Colonic mucosa (tissue), 4 donors: ENCODE measurements at regions of chr15 and their contacts with region 1.

Region 1: DNA sequence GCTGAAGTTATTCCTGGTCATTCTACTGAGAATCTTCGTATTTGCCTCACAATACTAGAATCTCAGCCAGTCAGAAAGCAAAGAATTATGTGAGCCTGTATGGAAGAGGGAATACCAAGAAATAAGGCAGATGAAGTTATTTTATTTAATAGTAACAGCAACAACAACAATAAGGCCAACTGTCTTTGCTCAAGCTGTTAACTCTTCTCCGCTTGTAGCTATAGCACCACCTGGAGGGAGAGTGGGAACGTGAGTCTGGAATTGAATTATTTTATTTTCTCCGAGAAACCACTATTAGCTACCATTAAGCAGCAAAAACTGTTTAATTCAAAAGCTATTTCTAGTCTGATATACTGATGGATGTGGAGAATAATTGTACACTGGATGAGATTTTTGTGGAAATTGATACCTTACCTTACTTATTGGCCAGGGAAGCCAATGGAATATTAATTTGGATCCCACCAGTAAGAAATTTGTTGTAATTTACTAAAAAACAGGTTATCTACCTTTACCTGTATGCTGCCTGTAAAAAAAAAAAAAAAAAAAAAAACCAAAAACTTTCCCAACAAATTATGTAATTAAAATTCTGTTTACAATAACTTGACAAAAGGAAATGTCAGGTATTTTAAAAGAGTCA is 50.1 kb downstream of the CALML4 start:
- DNase-seq: peak; percentile 56
- H3K4me3 ChIP-seq: no peak overlapping the region
- H3K27ac ChIP-seq: no peak overlapping the region
- H3K4me1 ChIP-seq: no peaks in the 10 kb centered on the region
- H3K27me3 ChIP-seq: no peaks in the 10 kb centered on the region
- CTCF ChIP-seq: peak; percentile 68

Region 2: DNA sequence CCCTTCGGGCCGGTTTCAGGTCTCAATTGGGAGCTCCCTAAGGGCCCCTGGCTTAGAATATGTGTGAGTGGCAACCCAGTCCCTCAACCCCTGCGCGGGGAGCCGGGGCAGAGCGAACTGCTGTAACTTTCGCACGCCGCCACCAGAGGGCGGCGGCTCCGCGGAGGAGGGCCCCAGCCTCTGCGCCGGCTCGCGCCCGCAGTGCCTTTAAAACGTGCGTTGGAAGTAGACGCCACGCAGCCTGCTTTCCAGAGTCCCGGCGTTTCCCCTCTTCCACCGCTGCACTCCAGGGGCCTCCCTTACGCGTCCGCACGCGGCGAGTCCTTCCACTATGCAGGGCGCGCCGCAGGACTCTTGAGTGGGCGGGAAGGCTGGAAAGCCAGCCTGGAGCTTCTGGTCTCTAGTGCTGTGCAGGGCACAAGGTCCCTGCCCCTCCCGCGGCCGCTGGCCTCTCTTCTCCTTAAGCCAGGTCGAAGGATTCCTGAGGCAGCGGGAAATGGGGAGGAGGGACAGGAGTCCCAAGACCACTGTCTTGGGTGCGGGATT is 291.5 kb before region 1 on chr15:
- intact Hi-C with region 1: loop called (anchors 1 kb)
- DNase-seq: peak; percentile 73
- H3K4me3 ChIP-seq: peak overlapping the region; percentile 56
- H3K27ac ChIP-seq: no peak overlapping the region
- H3K4me1 ChIP-seq: peaks cover 6% of the 10 kb centered on the region
- H3K27me3 ChIP-seq: no peaks in the 10 kb centered on the region
- CTCF ChIP-seq: peak; percentile 90

Region 3: DNA sequence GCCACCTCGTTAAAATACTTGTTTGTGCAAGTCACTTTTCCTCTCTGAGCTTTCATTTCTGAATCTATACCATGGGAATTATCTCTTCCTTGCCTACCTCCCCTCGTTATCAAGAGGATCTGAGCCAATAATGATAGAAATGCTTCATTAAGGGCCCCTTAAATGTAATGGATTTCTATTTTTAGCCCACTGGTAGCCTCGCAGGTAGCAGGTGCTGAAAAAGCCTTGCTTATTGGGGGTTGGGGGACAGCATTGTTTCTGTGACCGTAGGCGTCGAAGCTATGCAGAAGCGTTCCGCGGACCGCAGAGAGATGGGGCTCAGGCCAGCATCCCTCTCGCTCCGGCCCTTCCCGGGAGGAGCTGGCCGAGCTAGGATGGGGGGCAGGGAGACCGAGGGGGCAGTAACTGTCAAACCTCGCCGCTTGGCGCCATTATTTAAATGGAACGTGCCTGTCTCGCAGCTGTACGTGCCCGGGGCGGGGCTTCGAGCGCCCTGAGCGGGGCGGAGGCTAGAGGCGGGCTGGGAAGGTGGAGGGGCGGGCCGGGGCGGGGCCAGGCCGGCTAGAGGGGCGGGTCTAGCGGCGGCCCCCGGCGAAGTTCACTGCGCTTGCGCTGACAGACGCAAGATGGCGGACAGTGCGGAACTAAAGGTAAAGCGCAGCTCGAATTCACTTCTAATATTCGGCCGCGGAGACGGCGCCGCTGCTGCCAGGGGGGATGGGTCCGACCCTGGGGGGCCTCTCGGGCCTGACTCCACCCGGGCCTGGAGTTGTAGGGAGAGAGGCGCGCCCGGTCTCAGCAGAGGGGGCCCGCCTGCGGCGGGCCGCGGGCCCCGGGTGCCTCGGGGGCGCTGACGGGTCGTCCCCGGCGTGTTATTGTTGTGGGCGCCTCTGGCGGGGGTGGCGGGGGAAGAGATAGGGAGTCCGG is 101.1 kb before region 1 on chr15 and contains the start of gene PIAS1:
- intact Hi-C with region 1: loop called (anchors 10 kb)
- DNase-seq: peak; percentile 96
- H3K4me3 ChIP-seq: peak within 1 kb of the TSS; percentile 69
- H3K27ac ChIP-seq: peak within 1 kb of the TSS; percentile 87
- H3K4me1 ChIP-seq: peaks cover 4% of the 10 kb centered on the region
- H3K27me3 ChIP-seq: no peaks in the 10 kb centered on the region
- CTCF ChIP-seq: no peak
- total RNA-seq, gene PIAS1: 26.6 to 33.0 TPM